ENCODE measurements at regions of chr7 and their contacts with region 1.

Region 1: GRCh38 chr7:55649238-55649637 is 76.9 kb upstream of the VOPP1 start:
- DNase-seq: no peak
- H3K4me3 ChIP-seq: no peak overlapping the region
- H3K27ac ChIP-seq: no peak overlapping the region
- H3K4me1 ChIP-seq: no peaks in the 10 kb centered on the region
- H3K27me3 ChIP-seq: no peaks in the 10 kb centered on the region
- CTCF ChIP-seq: no peak

Region 2: DNA sequence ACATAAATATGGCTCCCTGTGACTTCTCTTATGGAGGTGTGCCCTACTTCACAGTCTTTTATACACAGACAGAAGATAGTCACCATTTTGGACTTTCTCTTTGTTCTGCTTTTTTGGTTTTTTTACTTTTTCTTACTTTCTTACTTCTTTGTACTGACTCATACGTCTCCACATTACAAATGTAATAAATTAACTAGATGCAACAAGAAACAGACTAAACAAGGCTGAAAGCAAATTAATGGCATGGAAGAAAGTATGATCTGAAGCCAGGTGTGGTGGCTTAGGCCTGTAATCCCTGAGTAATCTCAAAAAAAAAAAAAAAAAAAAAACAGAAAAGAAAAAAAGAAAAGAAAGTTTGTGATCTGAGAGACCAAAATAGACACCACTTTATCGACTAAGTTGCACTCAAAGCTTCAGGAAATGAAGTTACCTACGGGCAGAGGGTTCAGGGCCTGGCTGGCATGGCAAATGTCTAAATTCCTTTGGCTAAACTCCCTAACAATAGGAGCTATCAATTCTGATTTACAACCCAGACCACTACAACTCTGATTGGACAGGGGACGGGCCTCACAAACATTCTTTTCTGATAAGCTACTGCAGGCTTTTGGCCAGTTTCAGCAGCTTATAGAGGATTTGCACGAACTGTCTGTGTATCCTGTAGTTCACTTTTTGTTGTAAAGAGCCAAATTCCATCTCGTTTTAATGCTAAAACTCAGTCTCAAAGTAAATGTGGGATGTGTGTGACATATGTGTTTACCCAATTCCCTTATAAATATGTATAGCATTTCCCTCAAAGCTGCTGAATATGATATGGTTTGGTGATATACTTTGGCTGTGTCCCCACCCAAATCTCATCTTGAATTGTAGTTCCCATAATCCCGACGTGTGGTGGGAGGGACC is 84.3 kb after region 1 on chr7:
- CTCF ChIA-PET with region 1: no interaction called
- dilution Hi-C with region 1: loop called (anchors 5 kb)
- in situ Hi-C with region 1: no loop called
- intact Hi-C with region 1: no loop called
- DNase-seq: no peak
- H3K4me3 ChIP-seq: no peak overlapping the region
- H3K27ac ChIP-seq: no peak overlapping the region
- H3K4me1 ChIP-seq: no peaks in the 10 kb centered on the region
- H3K27me3 ChIP-seq: no peaks in the 10 kb centered on the region
- CTCF ChIP-seq: no peak